ENCODE measurements at regions of chr6 and their contacts with region 1.

Region 1: DNA sequence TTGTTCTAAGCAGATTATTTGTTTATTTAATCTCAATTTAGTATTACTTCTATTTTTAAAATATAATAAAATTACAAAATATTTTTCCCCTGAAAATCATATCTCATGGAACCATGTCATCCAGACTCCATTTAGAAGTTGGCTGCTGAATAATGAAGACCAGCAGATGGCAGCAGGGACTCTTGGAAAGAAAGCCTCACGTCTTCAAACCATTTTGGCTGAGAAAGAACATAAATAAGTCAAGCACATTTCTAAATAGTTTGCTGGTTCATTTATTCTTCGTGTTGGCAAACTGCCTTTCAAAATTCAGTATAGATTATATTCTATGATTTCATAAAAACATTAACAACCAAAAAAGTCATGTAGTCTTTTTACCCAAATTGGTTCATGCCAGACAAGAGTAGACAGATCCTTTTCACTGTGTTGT is 71.7 kb downstream of the RCAN2 start:
- DNase-seq: peak in 2 of 3 donors; percentile 30 to 66
- ATAC-seq: peak in 1 of 2 donors; percentile 60
- H3K4me3 ChIP-seq: no peak overlapping the region
- H3K27ac ChIP-seq: no peak overlapping the region
- H3K4me1 ChIP-seq: peaks cover 4% of the 10 kb centered on the region
- H3K27me3 ChIP-seq: no peaks in the 10 kb centered on the region

Region 2: DNA sequence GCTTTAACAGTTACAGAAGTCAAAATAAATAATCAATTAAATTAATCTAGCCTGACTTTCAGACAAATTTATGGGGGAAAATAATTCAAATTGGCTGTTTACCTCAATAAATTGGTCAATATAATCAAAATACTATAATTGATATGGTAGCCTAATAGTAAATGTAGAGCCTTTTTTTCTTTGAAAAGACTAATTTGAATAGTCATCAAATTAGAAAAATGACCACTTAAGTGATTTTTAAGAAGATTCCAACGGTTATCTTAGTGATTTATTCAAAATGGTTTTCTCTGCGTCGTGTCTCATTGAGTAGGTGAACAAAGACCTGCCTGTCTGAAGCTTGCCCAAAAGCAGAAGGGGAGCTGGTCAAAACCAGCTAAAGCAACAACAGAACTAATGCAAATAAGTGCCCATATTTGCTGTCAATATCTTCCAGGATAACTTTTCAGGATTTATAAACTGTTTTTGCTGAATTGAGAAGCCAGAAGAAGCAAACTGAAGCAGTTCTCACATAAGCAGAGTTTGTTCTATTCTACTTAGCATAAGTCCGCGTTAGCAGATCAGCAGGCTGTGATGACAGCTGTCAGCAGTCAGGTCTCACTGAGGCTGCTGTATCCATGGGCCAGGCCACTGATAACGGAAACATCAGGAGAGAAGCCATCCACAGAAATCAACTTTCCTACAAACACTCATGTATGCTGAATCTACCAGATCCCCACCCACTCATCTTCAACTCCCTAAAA is 64.7 kb after region 1 on chr6:
- intact Hi-C with region 1: loop called in 1 of 4 experiments (anchors 10 kb)
- DNase-seq: peak; percentile 43 to 78 (median 64)
- ATAC-seq: peak; percentile 84 to 85
- H3K4me3 ChIP-seq: peak overlapping the region; percentile 18
- H3K27ac ChIP-seq: peak overlapping the region; percentile 78
- H3K4me1 ChIP-seq: peaks cover 8% of the 10 kb centered on the region
- H3K27me3 ChIP-seq: no peaks in the 10 kb centered on the region

Region 3: GRCh38 chr6:46491628-46492547 is 72.3 kb after region 1 on chr6:
- intact Hi-C with region 1: loop called (anchors 5 to 10 kb)
- DNase-seq: peak; percentile 55 to 87 (median 81)
- ATAC-seq: peak; percentile 92 to 93
- H3K4me3 ChIP-seq: peak overlapping the region; percentile 85
- H3K27ac ChIP-seq: peak overlapping the region; percentile 84
- H3K4me1 ChIP-seq: no peaks in the 10 kb centered on the region
- H3K27me3 ChIP-seq: no peaks in the 10 kb centered on the region

Region 4: DNA sequence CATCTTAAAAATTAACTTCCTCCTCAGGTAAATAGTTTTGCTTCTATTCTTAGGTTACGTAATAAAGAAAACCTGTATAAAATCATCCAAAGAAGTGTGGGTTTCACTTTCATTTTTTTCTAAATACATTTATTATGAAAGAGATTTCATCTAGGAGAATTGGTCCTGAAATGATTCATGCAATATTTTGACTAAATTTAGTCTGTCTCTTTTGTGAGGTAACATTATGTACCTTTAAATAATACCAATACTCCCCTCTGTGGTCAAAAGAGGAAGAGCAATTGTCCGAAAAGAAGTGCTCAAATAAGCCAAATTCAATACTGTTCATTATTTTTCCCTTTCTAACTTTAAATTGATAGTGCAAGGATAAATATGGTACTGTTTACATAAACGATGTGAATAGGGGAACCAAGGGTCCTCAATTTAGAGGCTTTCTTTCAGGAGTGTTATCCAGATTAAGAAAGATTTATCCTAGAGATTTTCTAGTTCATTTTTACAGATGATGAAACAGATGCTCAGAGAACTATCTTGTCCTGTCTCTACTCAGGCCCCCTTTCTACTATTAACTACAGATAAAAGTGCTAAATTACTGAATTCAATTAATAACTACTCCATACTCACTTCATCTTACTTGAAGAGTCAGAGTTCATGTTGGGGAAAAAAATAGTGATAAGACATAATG is 206.8 kb after region 1 on chr6:
- intact Hi-C with region 1: loop called (anchors 5 kb)
- DNase-seq: no peak
- ATAC-seq: peak in 1 of 2 donors; percentile 31
- H3K4me3 ChIP-seq: no peak overlapping the region
- H3K27ac ChIP-seq: no peak overlapping the region
- H3K4me1 ChIP-seq: no peaks in the 10 kb centered on the region
- H3K27me3 ChIP-seq: no peaks in the 10 kb centered on the region

Region 5: GRCh38 chr6:46684771-46685170 is 265.2 kb after region 1 on chr6:
- intact Hi-C with region 1: no loop called
- DNase-seq: no peak
- ATAC-seq: no peak
- H3K4me3 ChIP-seq: no peak overlapping the region
- H3K27ac ChIP-seq: no peak overlapping the region
- H3K4me1 ChIP-seq: no peaks in the 10 kb centered on the region
- H3K27me3 ChIP-seq: no peaks in the 10 kb centered on the region

Region 6: GRCh38 chr6:47116616-47117015 is 697.0 kb after region 1 on chr6:
- intact Hi-C with region 1: no loop called
- DNase-seq: no peak
- ATAC-seq: no peak
- H3K4me3 ChIP-seq: no peak overlapping the region
- H3K27ac ChIP-seq: no peak overlapping the region
- H3K4me1 ChIP-seq: no peaks in the 10 kb centered on the region
- H3K27me3 ChIP-seq: no peaks in the 10 kb centered on the region